ENCODE measurements at regions of chr14 and their contacts with region 1.

Region 1: GRCh38 chr14:54440873-54441868 is at the start of gene CNIH1:
- DNase-seq: peak; percentile 92
- ATAC-seq: peak; percentile 92
- H3K4me3 Mint-ChIP-seq: peak within 1 kb of the TSS; percentile 98
- H3K27ac Mint-ChIP-seq: peak within 1 kb of the TSS; percentile 97
- H3K4me1 Mint-ChIP-seq: peaks cover 50% of the 10 kb centered on the region
- H3K27me3 Mint-ChIP-seq: peaks cover 2% of the 10 kb centered on the region
- CTCF ChIP-seq: peak; percentile 99
- total RNA-seq, gene CNIH1: 82.0 to 82.7 TPM

Region 2: GRCh38 chr14:54189748-54190354 is 251.3 kb before region 1 on chr14:
- CTCF ChIA-PET with region 1: no interaction called
- POLR2A ChIA-PET with region 1: no interaction called
- intact Hi-C with region 1: no loop called
- DNase-seq: no peak
- ATAC-seq: no peak
- H3K4me3 Mint-ChIP-seq: no peak overlapping the region
- H3K27ac Mint-ChIP-seq: no peak overlapping the region
- H3K4me1 Mint-ChIP-seq: peaks cover 4% of the 10 kb centered on the region
- H3K27me3 Mint-ChIP-seq: peaks cover 1% of the 10 kb centered on the region
- CTCF ChIP-seq: no peak

Region 3: GRCh38 chr14:54396493-54397335 is 44.5 kb before region 1 on chr14 and contains the start of gene CDKN3:
- CTCF ChIA-PET with region 1: interaction called, 3 read pairs
- POLR2A ChIA-PET with region 1: interaction called, 7 read pairs
- intact Hi-C with region 1: loop called (anchors 5 kb)
- DNase-seq: peak; percentile 99
- ATAC-seq: peak; percentile 97
- H3K4me3 Mint-ChIP-seq: peak within 1 kb of the TSS; percentile 91
- H3K27ac Mint-ChIP-seq: peak within 1 kb of the TSS; percentile 80
- H3K4me1 Mint-ChIP-seq: peaks cover 17% of the 10 kb centered on the region
- H3K27me3 Mint-ChIP-seq: no peaks in the 10 kb centered on the region
- CTCF ChIP-seq: no peak
- total RNA-seq, gene CDKN3: 88.0 to 92.7 TPM